ENCODE measurements at regions of chr14 and their contacts with region 1.

Region 1: GRCh38 chr14:106556665-106557289 is 1030.4 kb downstream of the TMEM121 start:
- DNase-seq: no peak
- H3K4me3 ChIP-seq: no peak overlapping the region
- H3K27ac ChIP-seq: no peak overlapping the region
- H3K4me1 ChIP-seq: no peaks in the 10 kb centered on the region
- H3K27me3 ChIP-seq: no peaks in the 10 kb centered on the region
- CTCF ChIP-seq: peak; percentile 35 to 61

Region 2: GRCh38 chr14:106511006-106511799 is 45.6 kb before region 1 on chr14:
- CTCF ChIA-PET with region 1: no interaction called
- dilution Hi-C with region 1: loop called (anchors 5 kb)
- in situ Hi-C with region 1: no loop called
- intact Hi-C with region 1: no loop called
- DNase-seq: no peak
- H3K4me3 ChIP-seq: no peak overlapping the region
- H3K27ac ChIP-seq: no peak overlapping the region
- H3K4me1 ChIP-seq: no peaks in the 10 kb centered on the region
- H3K27me3 ChIP-seq: no peaks in the 10 kb centered on the region
- CTCF ChIP-seq: no peak

Region 3: GRCh38 chr14:106631879-106632278 is 75.1 kb after region 1 on chr14:
- CTCF ChIA-PET with region 1: no interaction called
- dilution Hi-C with region 1: no loop called
- in situ Hi-C with region 1: no loop called
- intact Hi-C with region 1: no loop called
- DNase-seq: no peak
- H3K4me3 ChIP-seq: no peak overlapping the region
- H3K27ac ChIP-seq: no peak overlapping the region
- H3K4me1 ChIP-seq: no peaks in the 10 kb centered on the region
- H3K27me3 ChIP-seq: no peaks in the 10 kb centered on the region
- CTCF ChIP-seq: no peak

Region 4: GRCh38 chr14:106766145-106766544 is 209.4 kb after region 1 on chr14:
- CTCF ChIA-PET with region 1: no interaction called
- dilution Hi-C with region 1: no loop called
- in situ Hi-C with region 1: no loop called
- intact Hi-C with region 1: no loop called
- DNase-seq: no peak
- H3K4me3 ChIP-seq: no peak overlapping the region
- H3K27ac ChIP-seq: no peak overlapping the region
- H3K4me1 ChIP-seq: no peaks in the 10 kb centered on the region
- H3K27me3 ChIP-seq: no peaks in the 10 kb centered on the region
- CTCF ChIP-seq: no peak

Measured in mammary epithelial cell (primary cell).